Heart left ventricle (tissue), 16 donors: ENCODE measurements at regions of chr4 and their contacts with region 1.

Region 1: DNA sequence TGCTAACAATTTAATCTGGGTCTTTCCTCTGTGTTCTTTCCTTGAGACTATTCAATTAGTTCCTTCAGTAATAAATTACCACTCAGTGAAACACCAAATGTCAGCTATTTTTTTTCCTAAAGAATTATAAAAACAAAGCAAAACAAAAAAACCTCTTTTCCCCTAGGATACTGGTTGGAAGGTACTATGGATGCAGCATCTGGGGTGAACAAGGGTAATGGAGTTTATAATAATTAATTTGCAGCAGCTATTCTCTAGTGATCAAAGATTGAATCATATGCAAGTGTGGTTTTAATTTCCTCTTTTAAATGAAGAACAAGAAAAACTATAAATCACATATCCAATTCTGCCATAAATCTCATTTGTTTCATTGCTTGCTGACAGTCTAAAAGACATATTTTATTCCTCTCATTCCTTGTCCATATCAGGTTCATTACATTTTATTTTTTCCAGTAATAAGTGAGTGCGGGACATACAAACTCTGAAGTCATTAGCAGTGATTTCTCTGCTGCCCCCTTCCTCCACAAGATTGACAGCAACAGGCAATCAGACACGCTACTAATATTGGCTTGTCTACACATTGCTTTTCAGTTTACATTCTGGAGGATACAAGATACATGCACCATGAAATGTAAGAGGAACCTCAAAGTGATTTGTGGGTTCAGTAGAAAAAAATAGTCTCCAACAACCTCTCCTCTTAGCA is 1093.4 kb upstream of the SLIT2 start:
- DNase-seq: no peak
- ATAC-seq: no peak
- H3K4me3 ChIP-seq: no peak overlapping the region
- H3K27ac ChIP-seq: no peak overlapping the region
- H3K4me1 ChIP-seq: no peaks in the 10 kb centered on the region
- H3K27me3 ChIP-seq: no peaks in the 10 kb centered on the region
- CTCF ChIP-seq: no peak
- POLR2A ChIP-seq: no peak

Region 2: DNA sequence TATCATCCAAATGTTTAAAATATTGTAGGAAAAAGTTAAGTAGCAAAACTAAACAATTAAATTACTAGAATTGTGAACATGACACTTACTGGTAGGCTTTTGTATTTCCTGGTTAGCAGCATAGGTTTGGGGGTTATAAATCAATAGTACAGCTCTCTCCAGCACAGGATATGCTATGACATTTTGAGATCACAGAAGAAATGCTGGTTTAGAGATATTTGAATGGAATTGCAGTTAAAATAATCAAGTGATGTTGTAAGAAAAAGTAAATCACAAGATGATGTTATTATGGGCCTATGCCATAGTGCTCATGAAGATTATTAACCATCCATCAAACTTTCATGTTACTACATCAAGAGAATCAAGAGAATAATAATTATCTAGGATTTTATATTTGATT is 13.6 kb after region 1 on chr4:
- intact Hi-C with region 1: loop called in 1 of 10 experiments (anchors 1 kb)
- DNase-seq: no peak
- ATAC-seq: no peak
- H3K4me3 ChIP-seq: no peak overlapping the region
- H3K27ac ChIP-seq: no peak overlapping the region
- H3K4me1 ChIP-seq: no peaks in the 10 kb centered on the region
- H3K27me3 ChIP-seq: no peaks in the 10 kb centered on the region
- CTCF ChIP-seq: no peak
- POLR2A ChIP-seq: no peak

Region 3: DNA sequence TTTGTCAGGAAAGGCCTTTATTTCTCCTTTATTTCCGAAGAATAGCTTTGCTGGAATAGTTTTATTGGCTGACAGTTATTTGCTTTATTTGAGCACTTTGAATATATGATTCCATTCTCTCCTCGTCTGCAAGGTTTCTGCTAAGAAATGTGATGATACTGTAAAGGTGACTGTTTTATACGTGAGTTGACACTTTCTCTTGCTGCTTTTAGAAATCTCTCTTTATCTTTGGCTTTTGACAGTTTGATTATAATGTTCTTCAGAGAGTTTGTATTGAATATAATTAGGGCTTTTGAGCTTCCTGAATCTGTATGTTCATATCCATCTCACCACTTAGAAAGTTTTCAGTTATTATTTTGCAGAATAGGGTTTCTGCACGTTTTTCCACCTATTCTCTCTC is 89.8 kb after region 1 on chr4:
- intact Hi-C with region 1: no loop called
- DNase-seq: no peak
- ATAC-seq: no peak
- H3K4me3 ChIP-seq: no peak overlapping the region
- H3K27ac ChIP-seq: no peak overlapping the region
- H3K4me1 ChIP-seq: no peaks in the 10 kb centered on the region
- H3K27me3 ChIP-seq: no peaks in the 10 kb centered on the region
- CTCF ChIP-seq: no peak
- POLR2A ChIP-seq: no peak

Region 4: GRCh38 chr4:20203508-20203907 is 1045.2 kb after region 1 on chr4:
- intact Hi-C with region 1: loop called in 1 of 10 experiments (anchors 5 kb)
- DNase-seq: no peak
- ATAC-seq: no peak
- H3K4me3 ChIP-seq: no peak overlapping the region
- H3K27ac ChIP-seq: no peak overlapping the region
- H3K4me1 ChIP-seq: no peaks in the 10 kb centered on the region
- H3K27me3 ChIP-seq: no peaks in the 10 kb centered on the region
- CTCF ChIP-seq: no peak
- POLR2A ChIP-seq: no peak